ENCODE measurements at regions of chr19 and their contacts with region 1.

Region 1: DNA sequence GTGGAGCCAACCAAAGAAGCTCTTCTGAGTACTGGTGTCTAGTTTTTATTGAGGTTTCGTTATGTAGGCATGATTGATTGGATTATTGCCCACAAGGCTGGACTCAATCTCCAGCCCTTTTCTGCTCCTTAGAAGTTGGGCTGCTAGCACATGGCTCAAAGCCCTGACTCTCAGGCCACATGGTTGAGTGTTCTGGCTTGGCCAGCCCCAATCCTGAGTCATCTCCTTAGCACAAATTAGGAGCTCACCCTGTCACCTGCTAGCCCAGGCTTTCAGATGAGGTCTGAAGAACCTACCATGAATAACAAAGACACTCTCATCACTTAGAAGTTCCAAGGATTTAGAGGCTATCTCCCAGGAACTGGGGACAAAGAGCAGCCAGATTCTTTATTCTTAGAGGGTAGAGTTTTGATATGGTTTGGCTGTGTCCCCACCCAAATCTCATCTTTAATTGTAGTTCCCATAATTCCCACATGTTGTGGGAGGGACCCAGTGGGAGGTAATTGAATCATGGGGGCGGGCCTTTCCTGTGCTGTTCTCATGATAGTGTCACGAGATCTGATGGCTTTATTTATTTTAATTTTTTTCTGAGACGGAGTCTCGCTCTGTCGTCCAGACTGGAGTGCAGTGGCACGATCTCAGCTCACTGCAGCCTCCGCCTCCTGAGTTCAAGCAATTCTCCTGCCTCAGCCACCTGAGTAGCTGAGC is 11.3 kb downstream of the DPY19L3 start:
- DNase-seq: no peak
- ATAC-seq: no peak
- H3K4me3 Mint-ChIP-seq: no peak overlapping the region
- H3K27ac Mint-ChIP-seq: no peak overlapping the region
- H3K4me1 Mint-ChIP-seq: peaks cover 5% of the 10 kb centered on the region
- H3K27me3 Mint-ChIP-seq: no peaks in the 10 kb centered on the region
- CTCF ChIP-seq: no peak

Region 2: DNA sequence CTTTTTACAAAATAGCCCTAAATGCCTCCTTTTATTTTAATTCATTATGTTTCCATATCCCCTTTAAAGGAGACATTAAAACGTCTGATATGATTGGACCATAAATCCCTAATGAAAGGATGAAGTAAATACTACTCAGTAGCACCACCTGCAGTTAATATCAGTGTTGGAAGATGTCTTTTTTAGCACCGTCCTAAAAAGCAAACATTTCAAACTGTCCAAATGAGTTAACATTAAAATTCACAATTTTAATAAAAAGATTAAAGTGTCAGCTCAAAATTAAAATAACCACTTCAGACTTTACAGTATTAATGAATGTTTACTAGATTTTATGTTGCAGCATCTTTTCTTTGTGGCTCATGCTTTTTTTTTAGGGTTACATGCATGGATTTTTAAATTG is 59.2 kb before region 1 on chr19:
- CTCF ChIA-PET with region 1: no interaction called
- POLR2A ChIA-PET with region 1: no interaction called
- DNase-seq: no peak
- ATAC-seq: no peak
- H3K4me3 Mint-ChIP-seq: no peak overlapping the region
- H3K27ac Mint-ChIP-seq: no peak overlapping the region
- H3K4me1 Mint-ChIP-seq: no peaks in the 10 kb centered on the region
- H3K27me3 Mint-ChIP-seq: no peaks in the 10 kb centered on the region
- CTCF ChIP-seq: no peak

Region 3: DNA sequence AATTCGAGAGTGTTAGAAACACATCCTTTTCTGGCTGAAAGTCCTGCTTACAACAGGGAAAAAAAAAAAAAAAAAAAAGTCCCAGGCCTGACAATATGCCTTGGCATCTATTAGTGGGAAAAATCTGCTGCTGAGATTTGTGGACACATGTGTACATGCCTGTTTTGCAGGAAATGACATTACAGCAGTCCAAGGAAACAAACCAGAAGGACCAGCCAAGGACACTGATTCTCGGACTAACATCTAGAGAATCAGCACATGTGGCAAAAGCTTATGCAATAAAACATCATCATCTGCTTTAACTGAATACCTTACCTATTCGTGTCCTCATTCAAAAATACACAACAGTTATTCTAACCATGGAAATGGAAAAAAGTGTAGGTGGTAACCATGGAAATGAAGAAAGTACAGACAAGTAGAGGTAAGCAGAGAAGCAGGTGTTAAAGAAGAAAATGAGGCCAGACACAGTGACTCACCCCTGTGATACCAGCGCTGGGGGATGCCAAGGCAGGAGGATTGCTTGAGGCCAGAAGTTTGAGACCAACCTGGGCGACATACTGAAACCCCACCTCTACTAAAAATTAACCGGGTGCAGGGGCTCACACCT is 20.8 kb before region 1 on chr19:
- CTCF ChIA-PET with region 1: no interaction called
- POLR2A ChIA-PET with region 1: interaction called, 11 read pairs
- DNase-seq: no peak
- ATAC-seq: no peak
- H3K4me3 Mint-ChIP-seq: no peak overlapping the region
- H3K27ac Mint-ChIP-seq: no peak overlapping the region
- H3K4me1 Mint-ChIP-seq: no peaks in the 10 kb centered on the region
- H3K27me3 Mint-ChIP-seq: no peaks in the 10 kb centered on the region
- CTCF ChIP-seq: no peak